ENCODE measurements at regions of chr19 and their contacts with region 1.

Region 1: GRCh38 chr19:1540365-1540925 is 16.6 kb downstream of the PLK5 start:
- DNase-seq: no peak
- ATAC-seq: no peak
- H3K4me3 ChIP-seq: no peak overlapping the region
- H3K27ac ChIP-seq: no peak overlapping the region
- H3K4me1 ChIP-seq: peaks cover 8 to 17% of the 10 kb centered on the region in 2 experiments
- H3K27me3 ChIP-seq: no peaks in the 10 kb centered on the region; a peak in 1 of 5 replicates
- CTCF ChIP-seq: no peak
- EP300 ChIP-seq: no peak
- POLR2A ChIP-seq: no peak
- RAD21 ChIP-seq: no peak

Region 2: DNA sequence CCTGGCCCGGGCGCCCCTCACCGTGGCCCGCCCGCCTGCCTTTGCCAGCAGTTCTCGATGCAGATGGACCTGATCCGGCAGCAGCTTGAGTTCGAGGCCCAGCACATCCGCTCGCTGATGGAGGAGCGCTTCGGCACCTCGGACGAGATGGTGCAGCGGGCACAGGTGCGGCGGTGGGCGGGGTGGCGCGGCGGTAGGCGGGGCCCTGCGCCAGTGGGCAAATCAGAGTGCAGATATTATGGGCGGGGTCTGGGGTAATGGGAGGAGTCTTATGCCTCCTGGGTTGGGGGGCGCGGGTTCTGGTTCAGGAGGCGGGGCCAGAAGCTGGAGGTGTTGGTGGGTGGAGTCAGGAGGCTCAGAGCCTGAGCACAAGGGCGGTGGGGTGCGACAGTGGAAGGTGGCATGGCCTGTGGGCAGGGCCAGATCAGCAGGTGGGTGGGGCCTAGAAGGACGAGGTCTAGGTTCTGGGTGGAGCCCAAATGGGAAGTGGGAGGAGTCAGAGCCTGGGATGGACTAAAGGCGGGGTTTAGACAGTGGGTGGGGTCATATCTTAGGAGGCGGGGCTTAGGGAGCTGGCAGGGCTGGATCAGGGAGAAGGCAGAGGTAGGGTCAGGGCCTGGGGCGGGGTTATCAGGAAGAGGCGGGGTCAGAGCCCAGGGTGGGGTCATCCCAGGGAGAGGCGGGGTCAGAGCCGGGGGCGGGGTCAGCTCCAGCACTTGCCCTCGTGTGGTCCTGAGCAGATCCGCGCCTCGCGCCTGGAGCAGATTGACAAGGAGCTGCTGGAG is 84.9 kb before region 1 on chr19:
- CTCF ChIA-PET with region 1: no interaction called
- POLR2A ChIA-PET with region 1: no interaction called
- in situ Hi-C with region 1: no loop called
- intact Hi-C with region 1: no loop called
- DNase-seq: peak; percentile 92 to 98 (median 97)
- ATAC-seq: peak; percentile 92
- H3K4me3 ChIP-seq: peak overlapping the region; percentile 39
- H3K27ac ChIP-seq: no peak overlapping the region
- H3K4me1 ChIP-seq: peaks cover 5 to 73% of the 10 kb centered on the region in 2 experiments; a peak in 4 of 5 replicates
- H3K27me3 ChIP-seq: peaks cover 0 to 9% of the 10 kb centered on the region in 2 experiments; a peak in 1 of 5 replicates
- CTCF ChIP-seq: no peak; a peak in 1 of 6 replicates
- EP300 ChIP-seq: no peak
- POLR2A ChIP-seq: peak; percentile 60; the same call in 1 of the 2 replicates
- RAD21 ChIP-seq: no peak

Region 3: GRCh38 chr19:1490311-1491113 is 49.9 kb before region 1 on chr19 and contains the start of gene PCSK4:
- CTCF ChIA-PET with region 1: no interaction called
- POLR2A ChIA-PET with region 1: no interaction called
- in situ Hi-C with region 1: no loop called
- intact Hi-C with region 1: no loop called
- DNase-seq: peak; percentile 91 to 97 (median 94)
- ATAC-seq: peak; percentile 92
- H3K4me3 ChIP-seq: peak within 1 kb of the TSS; percentile 67
- H3K27ac ChIP-seq: peak within 1 kb of the TSS; percentile 94
- H3K4me1 ChIP-seq: peaks cover 26 to 82% of the 10 kb centered on the region in 2 experiments
- H3K27me3 ChIP-seq: no peaks in the 10 kb centered on the region
- CTCF ChIP-seq: no peak
- EP300 ChIP-seq: no peak
- POLR2A ChIP-seq: no peak
- RAD21 ChIP-seq: no peak
- polyA plus RNA-seq, gene PCSK4: 0.01 TPM in 1 of 2 experiments, not detected in the other

Region 4: GRCh38 chr19:1521636-1522035 is 18.8 kb before region 1 on chr19:
- CTCF ChIA-PET with region 1: no interaction called
- POLR2A ChIA-PET with region 1: no interaction called
- in situ Hi-C with region 1: no loop called
- intact Hi-C with region 1: no loop called
- DNase-seq: no peak
- ATAC-seq: no peak
- H3K4me3 ChIP-seq: no peak overlapping the region
- H3K27ac ChIP-seq: no peak overlapping the region
- H3K4me1 ChIP-seq: peaks cover 3 to 50% of the 10 kb centered on the region in 2 experiments; a peak in 3 of 5 replicates
- H3K27me3 ChIP-seq: peaks cover 11 to 28% of the 10 kb centered on the region in 2 experiments; a peak in 4 of 5 replicates
- CTCF ChIP-seq: no peak
- EP300 ChIP-seq: no peak
- POLR2A ChIP-seq: no peak
- RAD21 ChIP-seq: no peak

Region 5: DNA sequence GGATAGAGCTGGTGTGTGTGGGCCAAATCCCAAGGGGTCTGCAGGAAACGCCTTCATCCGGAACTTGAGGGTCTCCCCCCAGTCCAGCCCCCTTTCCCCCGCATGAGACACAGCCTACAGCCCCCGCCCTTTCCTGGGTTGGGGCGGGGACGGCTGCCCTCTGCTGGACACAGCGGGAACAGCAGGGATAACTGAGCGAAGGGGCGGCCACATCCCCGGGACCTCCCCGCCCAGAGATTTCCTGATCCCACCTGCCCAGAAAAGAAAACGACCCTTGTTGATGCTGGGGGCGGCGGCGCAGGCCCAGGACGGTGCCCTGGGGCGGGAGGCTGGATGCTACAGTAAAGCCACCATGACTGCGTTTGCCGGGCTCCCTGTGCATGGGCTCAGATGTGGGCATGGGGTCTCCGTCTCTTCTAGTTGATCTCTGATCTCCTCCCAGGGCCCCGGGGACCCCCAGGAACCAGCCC is 227.1 kb after region 1 on chr19:
- CTCF ChIA-PET with region 1: no interaction called
- POLR2A ChIA-PET with region 1: no interaction called
- in situ Hi-C with region 1: loop called (anchors 10 kb)
- intact Hi-C with region 1: loop called (anchors 10 kb)
- DNase-seq: peak; percentile 80 to 94 (median 90)
- ATAC-seq: peak; percentile 90
- H3K4me3 ChIP-seq: no peak overlapping the region
- H3K27ac ChIP-seq: no peak overlapping the region; the same call in 2 of the 3 replicates
- H3K4me1 ChIP-seq: peaks cover 9 to 51% of the 10 kb centered on the region in 2 experiments; a peak in 4 of 5 replicates
- H3K27me3 ChIP-seq: peaks cover 0 to 10% of the 10 kb centered on the region in 2 experiments; a peak in 4 of 5 replicates
- CTCF ChIP-seq: peak; percentile 90 to 94 (median 93)
- EP300 ChIP-seq: no peak
- POLR2A ChIP-seq: no peak
- RAD21 ChIP-seq: peak; percentile 92 to 97